ENCODE measurements at regions of chr14 and their contacts with region 1.

Region 1: GRCh38 chr14:35687335-35687939 is 121.7 kb downstream of the RALGAPA1 start:
- DNase-seq: peak; percentile 27
- H3K4me3 Mint-ChIP-seq: no peak overlapping the region
- H3K27ac Mint-ChIP-seq: no peak overlapping the region
- H3K4me1 Mint-ChIP-seq: no peaks in the 10 kb centered on the region
- H3K27me3 Mint-ChIP-seq: no peaks in the 10 kb centered on the region
- CTCF ChIP-seq: no peak

Region 2: DNA sequence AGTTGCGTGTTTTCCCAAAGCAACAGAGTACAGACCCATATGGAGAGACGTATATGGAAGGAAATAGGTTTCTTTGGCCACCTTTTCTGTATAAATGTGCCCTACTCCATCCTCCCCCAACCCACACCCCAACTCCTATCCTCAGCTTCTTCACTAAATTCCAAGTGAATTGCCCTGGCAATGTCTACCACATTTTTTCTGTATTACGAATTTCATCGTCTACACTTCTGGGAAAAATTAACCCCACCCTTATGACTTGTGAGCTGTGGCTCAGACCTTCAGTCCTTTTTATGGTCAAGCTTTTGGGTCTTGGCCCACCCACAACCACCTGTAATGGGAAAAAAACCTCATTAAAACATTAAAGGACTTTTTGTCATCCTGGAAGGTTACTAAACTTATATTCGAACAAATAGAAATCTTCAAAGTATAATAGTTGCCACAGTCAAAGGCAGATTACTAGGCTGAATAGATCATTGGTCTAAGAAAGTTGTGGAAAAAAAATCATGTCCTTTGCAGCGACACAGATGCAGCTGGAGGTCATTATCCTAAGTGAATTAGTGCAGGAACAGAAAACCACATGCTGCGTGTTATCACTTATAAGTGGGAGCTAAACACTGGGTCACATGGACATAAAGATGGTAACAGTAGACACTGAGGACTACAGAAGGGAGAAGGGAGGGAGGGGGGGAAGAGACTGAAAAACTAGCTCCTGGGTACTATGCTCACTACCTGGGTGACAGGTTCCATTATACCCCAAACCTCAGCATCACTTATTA is 267.2 kb before region 1 on chr14:
- CTCF ChIA-PET with region 1: interaction called, 3 read pairs
- intact Hi-C with region 1: loop called (anchors 5 kb)
- DNase-seq: no peak
- H3K4me3 Mint-ChIP-seq: no peak overlapping the region
- H3K27ac Mint-ChIP-seq: no peak overlapping the region
- H3K4me1 Mint-ChIP-seq: peaks cover 25% of the 10 kb centered on the region
- H3K27me3 Mint-ChIP-seq: no peaks in the 10 kb centered on the region
- CTCF ChIP-seq: no peak

Region 3: GRCh38 chr14:35438910-35439713 is 248.3 kb before region 1 on chr14:
- CTCF ChIA-PET with region 1: interaction called, 5 read pairs
- intact Hi-C with region 1: loop called (anchors 2 kb)
- DNase-seq: no peak
- H3K4me3 Mint-ChIP-seq: no peak overlapping the region
- H3K27ac Mint-ChIP-seq: no peak overlapping the region
- H3K4me1 Mint-ChIP-seq: no peaks in the 10 kb centered on the region
- H3K27me3 Mint-ChIP-seq: no peaks in the 10 kb centered on the region
- CTCF ChIP-seq: no peak

Region 4: GRCh38 chr14:35835208-35835982 is 148.0 kb after region 1 on chr14:
- CTCF ChIA-PET with region 1: no interaction called
- intact Hi-C with region 1: no loop called
- DNase-seq: no peak
- H3K4me3 Mint-ChIP-seq: no peak overlapping the region
- H3K27ac Mint-ChIP-seq: no peak overlapping the region
- H3K4me1 Mint-ChIP-seq: no peaks in the 10 kb centered on the region
- H3K27me3 Mint-ChIP-seq: no peaks in the 10 kb centered on the region
- CTCF ChIP-seq: no peak